H1 (cell line): ENCODE measurements at regions of chr2 and their contacts with region 1.

Region 1: GRCh38 chr2:207625018-207625907 is at the start of gene METTL21A:
- DNase-seq: peak; percentile 46 to 86
- H3K4me3 ChIP-seq: peak within 1 kb of the TSS; percentile 67 to 94 (median 82)
- H3K27ac ChIP-seq: peak within 1 kb of the TSS; percentile 72
- H3K4me1 ChIP-seq: peaks cover 0 to 4% (median 0%) of the 10 kb centered on the region in 4 experiments; a peak in 1 of 7 replicates
- H3K27me3 ChIP-seq: no peaks in the 10 kb centered on the region
- CTCF ChIP-seq: peak; percentile 37 to 45 (median 37); a peak in 3 of 4 replicates
- EP300 ChIP-seq: peak in 1 of 2 experiments; percentile 13; a peak in 1 of 3 replicates
- POLR2A ChIP-seq: peak; percentile 58 to 78
- RAD21 ChIP-seq: 0 out of 4 replicates have a peak, but pooled peaks have one; percentile 10 to 16
- total RNA-seq, gene METTL21A: 52.2 and 55.0 TPM in 2 replicates

Region 2: DNA sequence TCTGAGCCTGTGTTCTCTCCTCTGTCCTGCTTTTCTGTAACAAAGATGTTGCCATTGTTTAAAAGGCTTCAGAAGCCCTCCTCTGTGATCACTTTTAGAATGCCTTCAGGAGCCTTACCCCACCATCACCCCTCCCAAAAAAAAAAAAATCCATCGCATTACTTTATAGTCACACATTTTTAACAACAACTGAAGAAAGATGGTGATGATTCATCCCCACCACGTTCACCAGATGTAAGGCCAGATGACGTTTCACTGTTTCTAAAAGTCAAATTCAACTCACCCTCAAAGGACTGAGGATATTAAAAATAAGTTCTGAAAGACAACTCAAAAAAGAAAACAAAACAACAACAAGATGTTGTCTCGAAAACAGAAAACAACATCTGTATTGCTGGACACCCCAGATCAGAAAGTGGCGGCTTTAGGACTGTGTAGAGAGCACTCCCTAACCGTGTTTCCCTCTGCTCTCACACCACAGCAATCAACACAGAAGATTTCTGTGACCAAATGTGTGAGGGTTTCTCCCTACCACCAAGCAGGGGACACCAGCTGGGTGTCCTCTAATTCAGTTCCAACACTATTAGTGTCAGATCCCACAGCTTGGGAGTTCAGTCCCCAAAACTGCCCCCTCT is 157.4 kb before region 1 on chr2:
- CTCF ChIA-PET with region 1: no interaction called
- POLR2A ChIA-PET with region 1: no interaction called
- DNase-seq: no peak
- H3K4me3 ChIP-seq: no peak overlapping the region
- H3K27ac ChIP-seq: no peak overlapping the region
- H3K4me1 ChIP-seq: peaks cover 0 to 5% (median 3%) of the 10 kb centered on the region in 4 experiments; a peak in 3 of 7 replicates
- H3K27me3 ChIP-seq: no peaks in the 10 kb centered on the region
- CTCF ChIP-seq: no peak
- EP300 ChIP-seq: no peak
- POLR2A ChIP-seq: no peak
- RAD21 ChIP-seq: no peak

Region 3: DNA sequence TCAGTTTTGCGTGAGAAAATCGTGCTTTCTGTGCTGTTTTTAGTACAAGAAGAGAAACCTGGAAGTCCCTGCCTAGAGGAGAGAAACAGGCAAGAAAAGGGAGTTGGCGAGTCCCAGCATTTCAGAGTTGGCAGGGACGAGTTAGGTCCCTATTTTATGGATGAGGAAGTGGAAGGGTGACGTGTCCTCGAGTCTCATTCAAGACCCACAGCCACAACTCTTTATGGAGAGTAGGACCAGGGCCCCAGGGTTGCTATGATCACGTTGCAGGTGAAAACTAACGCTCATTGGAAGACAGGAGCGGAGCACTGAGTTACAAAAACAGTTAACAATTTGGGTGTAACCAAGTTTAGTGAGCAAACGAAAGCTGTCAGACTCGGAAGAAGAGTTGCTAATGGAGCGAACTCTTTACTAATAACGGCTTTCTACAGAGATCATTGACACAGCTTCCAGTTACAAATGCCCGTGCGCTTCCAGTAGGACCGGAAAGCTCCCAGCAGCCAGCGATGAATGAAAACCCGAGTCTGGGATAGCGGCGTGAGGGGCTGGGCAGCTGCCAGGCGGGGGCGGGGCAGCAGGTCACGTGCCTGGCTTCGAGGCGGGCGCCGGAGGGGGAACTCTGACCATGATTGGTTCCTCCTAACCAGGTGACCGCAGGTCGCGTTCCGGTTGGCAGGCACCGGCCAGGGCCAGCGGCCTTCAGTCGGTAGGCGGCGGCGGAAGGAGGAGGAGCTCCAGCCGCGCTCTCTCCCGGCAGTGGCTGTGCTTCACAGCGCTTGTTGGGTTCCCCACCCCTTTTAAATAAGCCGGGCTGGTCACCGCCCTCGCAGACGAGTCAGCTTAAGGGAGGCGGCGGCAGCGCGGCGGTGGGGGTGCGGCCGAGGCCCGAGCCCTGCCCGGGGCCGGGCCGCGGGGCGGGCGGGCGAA is 85.8 kb after region 1 on chr2 and contains the start of gene CCNYL1:
- CTCF ChIA-PET with region 1: interaction called, 11 read pairs
- POLR2A ChIA-PET with region 1: interaction called, 35 read pairs
- DNase-seq: peak; percentile 95 to 99
- H3K4me3 ChIP-seq: peak within 1 kb of the TSS; percentile 71 to 91 (median 84)
- H3K27ac ChIP-seq: peak within 1 kb of the TSS; percentile 41; the same call in 1 of the 2 replicates
- H3K4me1 ChIP-seq: peaks cover 0 to 3% (median under 1%) of the 10 kb centered on the region in 4 experiments; a peak in 4 of 7 replicates
- H3K27me3 ChIP-seq: no peaks in the 10 kb centered on the region
- CTCF ChIP-seq: no peak
- EP300 ChIP-seq: no peak
- POLR2A ChIP-seq: peak; percentile 97 to 99
- RAD21 ChIP-seq: no peak
- total RNA-seq, gene CCNYL1: 35.4 and 36.2 TPM in 2 replicates

Region 4: GRCh38 chr2:207720517-207721208 is 95.4 kb after region 1 on chr2:
- CTCF ChIA-PET with region 1: interaction called, 35 read pairs
- POLR2A ChIA-PET with region 1: interaction called, 4 read pairs
- DNase-seq: no peak
- H3K4me3 ChIP-seq: no peak overlapping the region
- H3K27ac ChIP-seq: no peak overlapping the region
- H3K4me1 ChIP-seq: 0 out of 7 replicates have a peak, but pooled peaks cover 0 to 3% (median 0%) of the 10 kb centered on the region in 4 experiments
- H3K27me3 ChIP-seq: no peaks in the 10 kb centered on the region
- CTCF ChIP-seq: no peak
- EP300 ChIP-seq: no peak
- POLR2A ChIP-seq: no peak
- RAD21 ChIP-seq: no peak

Region 5: DNA sequence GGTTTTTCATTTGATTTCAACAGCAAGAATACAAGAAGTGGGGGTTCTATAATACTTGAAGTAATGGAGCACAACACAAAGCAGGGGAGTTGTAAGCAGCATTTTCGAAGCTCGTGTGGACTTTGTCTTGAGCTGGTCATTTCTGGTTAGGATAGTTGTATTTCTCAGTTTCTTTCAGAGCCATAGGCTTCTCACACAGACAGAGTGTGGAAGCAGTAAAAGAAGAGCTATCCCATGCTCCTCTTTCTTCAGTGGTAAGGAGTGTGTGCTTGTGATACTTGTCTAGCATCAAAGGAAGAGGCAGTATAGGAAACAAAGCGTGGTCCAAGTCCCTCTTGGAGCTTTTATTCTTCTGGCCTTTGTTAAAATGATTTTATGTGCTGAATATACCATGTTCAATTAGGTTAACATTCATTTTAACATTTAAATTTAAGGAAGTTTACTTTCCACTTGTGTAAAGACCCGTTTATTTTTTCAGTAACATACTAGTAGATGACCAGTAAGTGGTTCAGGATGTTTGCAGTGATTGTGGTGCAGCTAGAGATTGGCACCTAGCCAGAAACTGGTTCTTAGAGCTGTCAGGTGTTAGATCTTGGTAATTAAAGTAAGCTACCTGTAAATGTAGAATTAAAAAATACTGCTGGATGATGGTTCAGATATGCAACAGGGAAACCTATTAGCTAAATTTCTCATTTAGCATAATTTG is 100.8 kb after region 1 on chr2:
- CTCF ChIA-PET with region 1: interaction called, 35 read pairs
- POLR2A ChIA-PET with region 1: interaction called, 4 read pairs
- DNase-seq: no peak
- H3K4me3 ChIP-seq: no peak overlapping the region
- H3K27ac ChIP-seq: no peak overlapping the region
- H3K4me1 ChIP-seq: 0 out of 7 replicates have a peak, but pooled peaks cover 0 to 5% (median 0%) of the 10 kb centered on the region in 4 experiments
- H3K27me3 ChIP-seq: no peaks in the 10 kb centered on the region
- CTCF ChIP-seq: no peak
- EP300 ChIP-seq: no peak
- POLR2A ChIP-seq: no peak
- RAD21 ChIP-seq: no peak

Region 6: DNA sequence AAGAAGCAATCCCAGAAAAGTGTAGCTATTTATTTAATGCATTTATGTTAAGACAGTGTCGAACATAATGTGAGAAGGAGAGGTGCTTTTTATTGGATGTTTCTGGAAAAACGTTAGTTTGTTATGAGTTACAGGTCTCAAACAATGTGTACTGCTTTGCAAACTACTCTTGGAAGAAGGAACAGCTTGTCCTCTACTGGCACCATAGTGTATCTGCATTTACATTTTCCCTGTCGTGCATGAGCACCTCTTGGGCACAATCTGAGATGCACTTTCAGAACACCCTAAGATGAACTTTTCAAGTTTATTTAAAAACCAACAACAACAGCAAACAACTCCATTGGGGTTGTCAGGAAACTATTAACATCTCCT is 109.0 kb after region 1 on chr2:
- CTCF ChIA-PET with region 1: interaction called, 35 read pairs
- POLR2A ChIA-PET with region 1: no interaction called
- DNase-seq: no peak
- H3K4me3 ChIP-seq: no peak overlapping the region
- H3K27ac ChIP-seq: no peak overlapping the region
- H3K4me1 ChIP-seq: 0 out of 7 replicates have a peak, but pooled peaks cover 0 to 2% (median 0%) of the 10 kb centered on the region in 4 experiments
- H3K27me3 ChIP-seq: no peaks in the 10 kb centered on the region
- CTCF ChIP-seq: peak in 2 of 3 experiments; percentile 10 to 18; a peak in 2 of 4 replicates
- EP300 ChIP-seq: no peak
- POLR2A ChIP-seq: no peak
- RAD21 ChIP-seq: peak; percentile 24 to 31; a peak in 2 of 4 replicates